ENCODE measurements at regions of chr14 and their contacts with region 1.

Region 1: DNA sequence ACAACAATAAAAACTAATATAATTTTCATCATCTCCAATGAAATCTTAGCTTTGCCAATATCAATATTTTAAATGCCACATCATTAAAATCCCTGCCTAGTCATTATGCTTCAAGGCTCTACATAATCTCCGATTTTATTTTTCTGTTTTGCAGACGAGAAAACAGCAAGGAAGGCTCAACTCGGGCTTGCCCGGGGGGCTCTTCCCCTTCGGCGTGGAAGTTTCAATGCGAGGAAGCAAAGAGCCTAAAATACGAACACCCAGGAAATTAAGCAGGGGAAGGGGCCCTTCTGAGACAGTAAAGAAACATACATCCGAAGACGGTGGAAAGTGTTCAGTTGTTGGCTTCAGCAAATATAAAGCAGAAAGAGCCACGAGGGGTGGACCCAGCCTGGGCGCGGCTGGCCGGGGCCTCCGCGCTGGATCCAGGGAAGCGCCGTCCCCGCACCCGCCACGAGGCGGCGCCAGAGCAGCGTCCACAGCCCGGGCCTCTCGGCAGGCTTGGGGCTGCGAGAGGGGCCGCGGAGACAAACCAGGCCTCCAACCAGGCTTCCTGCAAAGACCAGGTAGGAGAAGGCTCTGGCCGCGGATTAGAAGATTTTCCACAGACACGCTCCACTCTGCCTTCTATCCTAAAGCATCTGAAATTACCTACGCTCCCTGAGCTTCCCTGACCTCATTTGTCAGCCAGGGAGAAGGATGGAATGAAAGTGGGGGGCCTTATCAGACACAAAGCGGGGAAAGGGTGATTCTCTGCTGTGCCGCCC is 77.2 kb downstream of the SERPINA3 start:
- DNase-seq: peak; percentile 22
- ATAC-seq: peak; percentile 100
- H3K4me3 ChIP-seq: no peak overlapping the region; the same call in 1 of the 2 replicates
- H3K27ac ChIP-seq: no peak overlapping the region
- H3K4me1 ChIP-seq: peaks cover 2% of the 10 kb centered on the region; the same call in 1 of the 2 replicates
- H3K27me3 ChIP-seq: no peaks in the 10 kb centered on the region; the same call in 1 of the 2 replicates
- CTCF ChIP-seq: peak; percentile 92
- POLR2A ChIP-seq: no peak
- RAD21 ChIP-seq: peak; percentile 90

Region 2: GRCh38 chr14:94977016-94977415 is 287.6 kb after region 1 on chr14:
- CTCF ChIA-PET with region 1: no interaction called
- POLR2A ChIA-PET with region 1: no interaction called
- dilution Hi-C with region 1: no loop called
- in situ Hi-C with region 1: no loop called
- intact Hi-C with region 1: no loop called
- DNase-seq: no peak
- ATAC-seq: no peak
- H3K4me3 ChIP-seq: no peak overlapping the region
- H3K27ac ChIP-seq: no peak overlapping the region
- H3K4me1 ChIP-seq: no peaks in the 10 kb centered on the region
- H3K27me3 ChIP-seq: no peaks in the 10 kb centered on the region
- CTCF ChIP-seq: no peak
- POLR2A ChIP-seq: no peak
- RAD21 ChIP-seq: no peak

Region 3: GRCh38 chr14:95196290-95196689 is 506.9 kb after region 1 on chr14:
- CTCF ChIA-PET with region 1: no interaction called
- POLR2A ChIA-PET with region 1: no interaction called
- dilution Hi-C with region 1: no loop called
- in situ Hi-C with region 1: no loop called
- intact Hi-C with region 1: loop called (anchors 10 kb)
- DNase-seq: no peak
- ATAC-seq: no peak
- H3K4me3 ChIP-seq: no peak overlapping the region
- H3K27ac ChIP-seq: no peak overlapping the region
- H3K4me1 ChIP-seq: no peaks in the 10 kb centered on the region
- H3K27me3 ChIP-seq: no peaks in the 10 kb centered on the region; the same call in 1 of the 2 replicates
- CTCF ChIP-seq: no peak
- POLR2A ChIP-seq: no peak
- RAD21 ChIP-seq: peak; percentile 11; the same call in 1 of the 2 replicates

Region 4: GRCh38 chr14:95431199-95432143 is 742.1 kb after region 1 on chr14:
- CTCF ChIA-PET with region 1: no interaction called
- POLR2A ChIA-PET with region 1: no interaction called
- dilution Hi-C with region 1: no loop called
- in situ Hi-C with region 1: loop called (anchors 5 kb)
- intact Hi-C with region 1: loop called (anchors 2 kb)
- DNase-seq: peak; percentile 17
- ATAC-seq: no peak
- H3K4me3 ChIP-seq: no peak overlapping the region
- H3K27ac ChIP-seq: no peak overlapping the region
- H3K4me1 ChIP-seq: no peaks in the 10 kb centered on the region
- H3K27me3 ChIP-seq: no peaks in the 10 kb centered on the region
- CTCF ChIP-seq: peak; percentile 51
- POLR2A ChIP-seq: no peak
- RAD21 ChIP-seq: peak; percentile 37; the same call in 1 of the 2 replicates